Activated T-helper 1 cell treated with anti-CD3 and anti-CD28 coated beads, Interleukin-12 subunit alpha, Interleukin-12 subunit beta, Interleukin-2, Interleukin-4 antibody, amounts not matched to agents 30 ng/mL and 10 ng/mL and 1 ng/mL, durations not matched to agents 14 hours and 24 hours and 36 hours (primary cell): ENCODE measurements at regions of chr5 and their contacts with region 1.

Region 1: DNA sequence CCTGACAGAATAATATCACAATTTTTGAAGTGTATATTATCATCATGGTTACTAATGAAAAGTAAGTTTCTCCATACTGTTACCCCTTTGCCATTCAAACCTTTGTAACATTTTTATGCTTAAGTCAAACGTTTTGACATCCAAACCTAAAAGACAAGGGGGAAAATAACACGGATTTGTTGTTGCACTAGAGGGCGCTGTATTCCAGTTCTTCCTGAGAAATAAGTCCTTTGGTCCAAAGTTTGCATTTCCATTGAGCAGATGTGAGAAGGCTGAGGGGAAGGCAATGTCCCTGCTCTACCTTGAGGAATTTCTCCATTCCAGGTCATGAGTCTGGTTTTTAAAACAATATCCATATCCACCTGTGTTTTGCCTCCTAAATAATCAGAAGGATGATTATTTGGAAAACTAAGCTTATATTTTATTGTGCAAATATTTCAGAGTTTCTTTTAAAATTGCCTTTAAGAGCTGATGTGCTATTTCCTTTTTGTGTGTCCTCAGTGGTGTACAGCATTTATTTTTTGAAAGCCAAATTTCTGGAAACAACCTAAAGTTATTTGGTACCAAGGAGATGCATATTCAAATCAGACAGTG is 9.7 kb downstream of the LECT2 start:
- DNase-seq: no peak
- H3K4me3 Mint-ChIP-seq: no peak overlapping the region
- H3K27ac Mint-ChIP-seq: no peak overlapping the region
- H3K4me1 Mint-ChIP-seq: no peaks in the 10 kb centered on the region
- H3K27me3 Mint-ChIP-seq: peaks cover 9% of the 10 kb centered on the region

Region 2: DNA sequence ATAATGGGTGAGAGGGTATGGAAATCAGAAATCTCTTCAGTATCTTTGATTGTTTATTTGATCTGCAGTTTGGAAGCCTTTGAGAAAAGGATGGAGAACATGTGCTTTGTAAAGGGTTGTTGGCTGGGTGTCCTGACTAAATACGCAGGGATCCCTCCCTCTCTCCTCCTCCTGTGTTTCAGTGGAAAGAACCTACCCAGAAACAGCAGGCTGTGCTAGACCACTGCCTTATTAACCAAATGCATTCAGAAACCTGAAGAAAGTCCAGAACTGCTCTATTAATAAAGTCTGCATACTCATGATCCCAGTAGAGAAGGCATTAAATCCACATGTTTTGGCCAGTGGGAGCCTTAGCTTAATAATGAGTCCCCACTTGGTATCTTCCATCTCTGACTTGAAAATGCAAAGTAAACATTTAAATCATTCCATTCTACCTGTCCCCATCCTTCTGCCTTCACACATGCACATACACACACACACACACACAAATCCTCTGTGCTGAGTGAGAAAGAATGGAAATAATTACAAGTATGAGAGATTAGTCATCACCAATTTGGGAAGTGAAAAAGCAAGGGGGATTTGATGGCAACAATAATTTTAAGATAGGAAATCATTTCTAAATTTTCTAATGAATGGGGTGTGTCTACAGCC is 19.7 kb after region 1 on chr5:
- intact Hi-C with region 1: no loop called
- DNase-seq: no peak
- H3K4me3 Mint-ChIP-seq: no peak overlapping the region
- H3K27ac Mint-ChIP-seq: no peak overlapping the region
- H3K4me1 Mint-ChIP-seq: no peaks in the 10 kb centered on the region
- H3K27me3 Mint-ChIP-seq: peaks cover 9% of the 10 kb centered on the region

Region 3: GRCh38 chr5:135993880-135994636 is 49.0 kb after region 1 on chr5:
- intact Hi-C with region 1: no loop called
- DNase-seq: no peak
- H3K4me3 Mint-ChIP-seq: no peak overlapping the region
- H3K27ac Mint-ChIP-seq: no peak overlapping the region
- H3K4me1 Mint-ChIP-seq: no peaks in the 10 kb centered on the region
- H3K27me3 Mint-ChIP-seq: peaks cover 6% of the 10 kb centered on the region

Region 4: GRCh38 chr5:136062366-136063274 is 117.6 kb after region 1 on chr5:
- intact Hi-C with region 1: loop called (anchors 5 kb)
- DNase-seq: no peak
- H3K4me3 Mint-ChIP-seq: no peak overlapping the region
- H3K27ac Mint-ChIP-seq: no peak overlapping the region
- H3K4me1 Mint-ChIP-seq: no peaks in the 10 kb centered on the region
- H3K27me3 Mint-ChIP-seq: peaks cover 2% of the 10 kb centered on the region

Region 5: DNA sequence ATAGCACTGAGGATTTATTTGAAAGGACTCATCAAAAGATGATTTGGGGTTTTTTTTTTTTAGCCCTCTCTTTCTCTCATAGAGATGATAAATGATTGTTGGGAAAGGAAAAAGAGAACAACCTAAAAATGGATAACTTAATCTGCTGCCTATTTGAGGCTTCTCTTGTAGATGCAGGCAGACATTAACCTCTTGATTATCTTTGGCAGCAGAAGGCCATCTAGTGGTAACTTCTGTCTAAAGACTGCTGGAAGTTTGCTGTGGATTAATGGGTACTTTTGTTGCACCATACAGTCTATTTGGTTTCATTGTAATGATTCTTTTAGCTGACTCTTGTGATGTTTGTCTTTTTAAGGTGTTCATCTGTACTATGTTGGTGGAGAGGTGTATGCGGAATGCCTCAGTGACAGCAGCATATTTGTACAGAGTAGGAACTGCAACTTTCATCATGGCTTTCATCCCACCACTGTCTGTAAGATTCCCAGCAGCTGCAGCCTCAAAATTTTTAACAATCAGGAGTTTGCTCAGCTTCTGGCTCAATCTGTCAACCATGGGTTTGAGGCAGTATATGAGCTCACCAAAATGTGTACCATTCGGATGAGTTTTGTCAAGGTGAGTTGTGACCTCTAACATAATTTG is 229.1 kb after region 1 on chr5:
- intact Hi-C with region 1: loop called (anchors 1 kb)
- DNase-seq: no peak
- H3K4me3 Mint-ChIP-seq: no peak overlapping the region
- H3K27ac Mint-ChIP-seq: no peak overlapping the region
- H3K4me1 Mint-ChIP-seq: no peaks in the 10 kb centered on the region
- H3K27me3 Mint-ChIP-seq: no peaks in the 10 kb centered on the region

Region 6: DNA sequence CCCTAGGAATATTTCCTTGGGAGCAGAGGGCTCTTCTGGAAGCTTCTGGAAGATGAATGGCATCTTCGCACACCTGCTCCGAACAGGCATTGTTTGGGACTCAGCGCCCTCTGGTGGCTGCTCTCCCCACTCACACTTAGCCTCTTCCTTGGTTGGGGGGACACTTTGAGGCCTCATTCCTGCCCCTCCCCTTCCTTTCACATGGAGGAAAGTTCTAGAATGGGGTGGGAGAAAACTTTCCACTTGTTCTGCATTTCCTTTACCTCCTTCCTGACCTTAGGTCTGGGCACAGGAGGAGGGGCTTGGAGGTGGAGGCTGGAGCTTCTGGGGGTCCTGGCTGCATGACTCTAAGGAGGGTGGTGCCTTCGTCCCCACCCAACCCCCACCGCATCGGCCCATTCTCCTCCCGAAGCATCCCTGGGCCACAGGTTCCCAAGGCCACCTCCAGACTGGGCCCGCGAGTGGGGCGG is 267.2 kb after region 1 on chr5:
- intact Hi-C with region 1: loop called (anchors 1 kb)
- DNase-seq: peak; percentile 8
- H3K4me3 Mint-ChIP-seq: no peak overlapping the region
- H3K27ac Mint-ChIP-seq: no peak overlapping the region
- H3K4me1 Mint-ChIP-seq: no peaks in the 10 kb centered on the region
- H3K27me3 Mint-ChIP-seq: peaks cover 3% of the 10 kb centered on the region